HEK293 (cell line): ENCODE measurements at regions of chr2 and their contacts with region 1.

Region 1: DNA sequence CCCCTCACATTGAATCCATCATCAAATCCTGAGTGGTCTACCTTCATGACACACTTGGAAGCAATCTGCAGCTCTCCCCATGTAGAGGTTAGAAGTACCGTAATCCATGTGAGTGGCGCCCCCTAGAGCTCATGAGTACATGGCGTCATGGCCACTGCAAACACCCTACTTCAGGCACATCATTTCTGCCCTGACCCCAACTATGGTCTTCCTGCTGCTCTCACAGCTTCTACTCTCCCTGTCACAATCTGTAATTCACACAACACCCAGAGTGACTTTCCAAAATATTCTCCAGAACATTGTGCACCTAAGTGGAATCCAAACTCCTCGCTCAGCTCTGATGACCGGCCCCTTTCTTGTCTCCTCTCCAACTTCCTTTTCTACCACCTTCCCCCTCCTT is 141.9 kb downstream of the ANKRD44 start:
- H3K4me3 ChIP-seq: no peak overlapping the region
- H3K27ac ChIP-seq: no peak overlapping the region
- H3K4me1 ChIP-seq: no peaks in the 10 kb centered on the region
- CTCF ChIP-seq: peak; percentile 57

Region 2: GRCh38 chr2:197011799-197012641 is 156.7 kb before region 1 on chr2:
- CTCF ChIA-PET with region 1: interaction called, 28 read pairs
- POLR2A ChIA-PET with region 1: no interaction called
- H3K4me3 ChIP-seq: no peak overlapping the region
- H3K27ac ChIP-seq: no peak overlapping the region
- H3K4me1 ChIP-seq: no peaks in the 10 kb centered on the region
- CTCF ChIP-seq: peak; percentile 50; the same call in 1 of the 2 replicates

Region 3: GRCh38 chr2:197179744-197180498 is 11.2 kb after region 1 on chr2:
- CTCF ChIA-PET with region 1: interaction called, 15 read pairs
- POLR2A ChIA-PET with region 1: no interaction called
- H3K4me3 ChIP-seq: no peak overlapping the region
- H3K27ac ChIP-seq: no peak overlapping the region
- H3K4me1 ChIP-seq: peaks cover 9% of the 10 kb centered on the region
- CTCF ChIP-seq: no peak